ENCODE measurements at regions of chr22 and their contacts with region 1.

Region 1: GRCh38 chr22:37538590-37539357 is 19.6 kb upstream of the CARD10 start:
- DNase-seq: peak; percentile 96
- H3K4me3 Mint-ChIP-seq: peak overlapping the region; percentile 5
- H3K27ac Mint-ChIP-seq: peak overlapping the region; percentile 12
- H3K4me1 Mint-ChIP-seq: peaks cover 37% of the 10 kb centered on the region
- H3K27me3 Mint-ChIP-seq: peaks cover 9% of the 10 kb centered on the region

Region 2: DNA sequence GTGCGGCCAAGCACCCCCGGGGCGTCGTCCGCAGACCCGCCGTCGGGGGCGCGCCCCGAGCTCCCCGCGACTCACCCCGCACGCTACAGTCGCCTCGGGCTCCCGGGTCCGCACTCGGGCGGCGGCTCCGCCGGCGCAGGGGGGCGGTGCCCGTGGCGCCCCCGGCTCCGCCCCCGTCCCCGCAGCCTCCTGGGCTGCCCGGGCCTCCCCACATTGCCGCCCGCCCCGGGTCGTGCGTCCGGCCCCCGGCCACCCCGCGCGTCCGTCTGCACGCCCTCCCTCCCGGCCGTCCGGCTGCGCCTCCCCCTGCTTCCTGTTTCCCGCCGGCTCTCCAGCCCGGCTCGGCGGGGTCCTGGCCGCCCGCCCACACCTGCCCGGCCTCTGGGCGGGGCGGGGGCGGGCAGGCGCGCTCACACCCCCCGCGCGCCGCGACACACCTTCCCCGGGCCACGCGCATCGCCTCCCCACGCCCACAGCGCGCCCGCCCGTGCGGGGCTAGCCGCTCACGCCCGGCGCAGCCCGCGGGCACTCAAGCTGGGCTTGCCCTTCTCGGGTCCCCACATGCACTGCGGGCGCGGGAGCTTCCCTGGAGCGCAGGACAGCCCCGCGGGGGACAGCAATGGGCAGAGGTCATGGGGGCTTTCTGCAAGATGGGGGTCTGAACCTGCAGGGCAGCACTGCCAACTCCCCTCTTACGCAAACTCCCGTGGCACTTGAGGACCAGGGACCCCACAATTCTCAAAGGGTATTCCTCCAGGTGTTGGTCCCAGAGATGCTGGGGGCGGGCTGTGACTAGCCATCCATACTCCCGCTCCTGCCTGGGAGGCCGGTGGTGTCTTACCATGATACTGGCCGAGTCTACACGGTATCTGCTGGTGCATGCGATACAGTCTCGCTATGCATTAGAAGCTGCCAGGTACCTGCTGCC is 19.2 kb before region 1 on chr22 and contains the start of gene CARD10:
- intact Hi-C with region 1: no loop called
- DNase-seq: peak; percentile 73
- H3K4me3 Mint-ChIP-seq: peak within 1 kb of the TSS; percentile 67
- H3K27ac Mint-ChIP-seq: no peak within 1 kb of the TSS
- H3K4me1 Mint-ChIP-seq: peaks cover 4% of the 10 kb centered on the region
- H3K27me3 Mint-ChIP-seq: peaks cover 60% of the 10 kb centered on the region
- total RNA-seq, gene CARD10: not detected in 2 replicates

Region 3: GRCh38 chr22:37561212-37562048 is 22.7 kb after region 1 on chr22:
- intact Hi-C with region 1: loop called (anchors 1 kb)
- DNase-seq: peak; percentile 91
- H3K4me3 Mint-ChIP-seq: peak overlapping the region; percentile 67
- H3K27ac Mint-ChIP-seq: peak overlapping the region; percentile 74
- H3K4me1 Mint-ChIP-seq: peaks cover 17% of the 10 kb centered on the region
- H3K27me3 Mint-ChIP-seq: peaks cover 59% of the 10 kb centered on the region

Region 4: DNA sequence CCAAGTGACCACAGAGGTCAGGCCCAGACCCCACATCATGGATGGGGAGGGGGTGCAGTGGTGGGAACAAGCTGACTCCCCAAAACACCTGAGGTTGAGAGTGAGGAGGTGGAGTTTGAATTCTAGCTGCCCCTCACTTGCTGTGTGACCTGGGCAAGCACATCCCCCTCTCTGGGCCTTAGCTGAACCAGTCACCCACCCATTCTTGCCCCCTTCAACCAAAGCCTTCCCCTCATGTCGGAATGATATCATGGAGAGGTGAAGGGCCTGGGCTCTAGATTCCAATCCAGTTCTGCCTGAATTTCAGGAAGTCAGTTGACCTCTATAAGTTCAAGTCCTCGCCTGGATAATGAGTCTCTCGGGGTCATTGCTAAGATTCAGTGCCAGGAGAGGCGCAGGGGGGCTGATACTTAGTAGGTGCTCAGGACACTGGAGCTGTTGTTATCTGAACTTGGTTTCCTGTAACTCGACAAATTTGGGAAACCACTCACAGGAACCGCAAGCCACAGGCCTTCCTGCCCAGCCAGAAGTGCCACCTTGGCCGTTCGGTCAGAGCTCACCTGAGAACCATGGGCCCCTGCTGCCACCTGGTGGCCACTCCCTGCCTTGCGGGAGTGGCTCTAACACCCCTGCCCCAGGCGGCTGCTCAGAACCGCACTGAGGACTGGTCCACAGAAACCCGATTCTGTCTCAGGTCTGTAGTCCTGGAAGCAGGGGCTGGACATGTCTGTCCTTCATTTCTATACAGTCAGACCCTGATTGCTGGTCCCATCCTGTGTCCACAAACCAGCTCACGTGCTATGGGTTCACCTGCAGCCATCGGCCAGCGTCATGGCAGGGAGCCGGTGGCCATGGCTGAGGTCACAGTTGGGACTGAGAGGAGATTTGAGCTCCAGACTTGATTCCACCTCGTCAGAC is 28.4 kb after region 1 on chr22:
- intact Hi-C with region 1: loop called (anchors 1 kb)
- DNase-seq: peak; percentile 97
- H3K4me3 Mint-ChIP-seq: peak overlapping the region; percentile 59
- H3K27ac Mint-ChIP-seq: peak overlapping the region; percentile 68
- H3K4me1 Mint-ChIP-seq: peaks cover 19% of the 10 kb centered on the region
- H3K27me3 Mint-ChIP-seq: peaks cover 28% of the 10 kb centered on the region

Region 5: GRCh38 chr22:37591823-37592404 is 53.1 kb after region 1 on chr22:
- intact Hi-C with region 1: loop called (anchors 1 kb)
- DNase-seq: no peak
- H3K4me3 Mint-ChIP-seq: peak overlapping the region; percentile 81
- H3K27ac Mint-ChIP-seq: peak overlapping the region; percentile 48
- H3K4me1 Mint-ChIP-seq: peaks cover 10% of the 10 kb centered on the region
- H3K27me3 Mint-ChIP-seq: peaks cover 7% of the 10 kb centered on the region

Region 6: GRCh38 chr22:37608477-37609239 is 69.9 kb after region 1 on chr22 and contains the start of gene GGA1:
- intact Hi-C with region 1: no loop called
- DNase-seq: peak; percentile 99
- H3K4me3 Mint-ChIP-seq: peak within 1 kb of the TSS; percentile 99
- H3K27ac Mint-ChIP-seq: peak within 1 kb of the TSS; percentile 98
- H3K4me1 Mint-ChIP-seq: peaks cover 40% of the 10 kb centered on the region
- H3K27me3 Mint-ChIP-seq: peaks cover 3% of the 10 kb centered on the region
- total RNA-seq, gene GGA1: 75.8 and 77.2 TPM in 2 replicates

Measured in activated CD4-positive, alpha-beta T cell treated with anti-CD3 and anti-CD28 coated beads, Interleukin-2, amount 10 ng/mL, durations not matched to agents 24 days and 14 days (primary cell).